Activated naive CD4-positive, alpha-beta T cell treated with anti-CD3 and anti-CD28 coated beads for 36 hours (primary cell): ENCODE measurements at regions of chr19 and their contacts with region 1.

Region 1: DNA sequence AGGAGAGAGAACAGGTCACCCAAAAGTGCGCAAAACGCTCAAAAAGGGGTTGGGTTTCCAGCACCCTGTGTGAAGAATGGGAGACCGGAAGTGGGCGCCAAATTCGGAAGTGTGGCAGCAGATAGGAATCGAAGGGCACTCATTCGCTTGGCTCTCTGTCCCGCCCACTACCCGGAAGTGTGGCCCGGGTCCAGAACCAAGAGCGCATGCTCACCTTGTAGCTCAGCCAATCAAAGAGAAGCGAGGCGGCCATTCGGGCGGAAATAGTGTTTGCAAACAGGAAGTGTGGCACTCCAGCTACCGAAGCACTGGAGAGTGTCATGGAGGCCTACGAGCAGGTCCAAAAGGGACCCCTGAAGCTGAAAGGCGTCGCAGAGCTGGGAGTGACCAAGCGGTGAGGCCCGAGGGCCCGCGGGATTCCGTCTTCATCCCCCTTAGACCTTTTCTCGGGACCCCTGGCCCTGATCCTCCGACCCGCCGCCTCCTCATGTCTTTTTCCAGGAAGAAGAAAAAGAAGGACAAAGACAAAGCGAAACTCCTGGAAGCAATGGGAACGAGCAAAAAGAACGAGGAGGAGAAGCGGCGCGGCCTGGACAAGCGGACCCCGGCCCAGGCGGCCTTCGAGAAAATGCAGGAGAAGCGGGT is at the start of gene FAM32A:
- DNase-seq: peak; percentile 100
- H3K4me3 Mint-ChIP-seq: peak within 1 kb of the TSS; percentile 98
- H3K27ac Mint-ChIP-seq: peak within 1 kb of the TSS; percentile 95
- H3K4me1 Mint-ChIP-seq: peaks cover 32% of the 10 kb centered on the region
- H3K27me3 Mint-ChIP-seq: no peaks in the 10 kb centered on the region
- total RNA-seq, gene FAM32A: 38.2 to 41.9 TPM

Region 2: GRCh38 chr19:16041299-16041990 is 143.8 kb before region 1 on chr19:
- CTCF ChIA-PET with region 1: interaction called, 33 read pairs
- intact Hi-C with region 1: loop called (anchors 1 kb)
- DNase-seq: peak; percentile 83
- H3K4me3 Mint-ChIP-seq: peak overlapping the region; percentile 21
- H3K27ac Mint-ChIP-seq: no peak overlapping the region
- H3K4me1 Mint-ChIP-seq: peaks cover 11% of the 10 kb centered on the region
- H3K27me3 Mint-ChIP-seq: no peaks in the 10 kb centered on the region

Region 3: DNA sequence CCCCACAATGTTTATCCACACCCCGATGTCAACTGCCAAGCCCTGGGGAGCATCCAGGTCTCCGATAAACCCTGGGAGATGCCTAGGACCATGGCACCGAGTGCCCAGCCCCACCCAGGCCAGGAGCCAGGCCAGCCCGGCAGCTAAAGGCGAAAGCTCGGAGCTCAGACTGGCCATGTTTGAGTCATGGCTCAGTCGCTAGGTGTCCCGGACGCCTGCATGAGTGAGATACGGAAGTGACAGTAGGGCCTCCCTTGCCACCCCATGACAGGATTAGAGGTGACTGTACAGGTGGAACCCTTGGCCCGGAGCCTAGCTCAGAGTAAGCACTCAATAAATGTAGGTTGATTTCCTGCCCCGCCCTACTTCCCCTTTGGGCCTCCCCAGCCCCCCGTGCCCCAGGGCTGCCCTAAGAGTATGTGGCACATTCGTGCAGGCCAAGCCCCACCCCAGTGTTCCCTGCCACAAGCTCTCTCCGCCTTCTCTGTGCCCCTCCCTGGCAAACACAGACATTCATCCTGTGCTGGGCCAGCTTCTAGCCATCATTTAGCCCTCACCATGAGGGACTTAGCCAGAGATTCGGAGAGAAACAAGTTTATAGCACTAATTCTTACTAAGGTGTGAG is 114.8 kb before region 1 on chr19:
- CTCF ChIA-PET with region 1: interaction called, 6 read pairs
- intact Hi-C with region 1: loop called (anchors 1 kb)
- DNase-seq: peak; percentile 96
- H3K4me3 Mint-ChIP-seq: no peak overlapping the region
- H3K27ac Mint-ChIP-seq: no peak overlapping the region
- H3K4me1 Mint-ChIP-seq: peaks cover 38% of the 10 kb centered on the region
- H3K27me3 Mint-ChIP-seq: no peaks in the 10 kb centered on the region

Region 4: GRCh38 chr19:16168465-16169081 is 16.7 kb before region 1 on chr19:
- CTCF ChIA-PET with region 1: interaction called, 10 read pairs
- intact Hi-C with region 1: no loop called
- DNase-seq: no peak
- H3K4me3 Mint-ChIP-seq: no peak overlapping the region
- H3K27ac Mint-ChIP-seq: no peak overlapping the region
- H3K4me1 Mint-ChIP-seq: peaks cover 4% of the 10 kb centered on the region
- H3K27me3 Mint-ChIP-seq: no peaks in the 10 kb centered on the region

Region 5: DNA sequence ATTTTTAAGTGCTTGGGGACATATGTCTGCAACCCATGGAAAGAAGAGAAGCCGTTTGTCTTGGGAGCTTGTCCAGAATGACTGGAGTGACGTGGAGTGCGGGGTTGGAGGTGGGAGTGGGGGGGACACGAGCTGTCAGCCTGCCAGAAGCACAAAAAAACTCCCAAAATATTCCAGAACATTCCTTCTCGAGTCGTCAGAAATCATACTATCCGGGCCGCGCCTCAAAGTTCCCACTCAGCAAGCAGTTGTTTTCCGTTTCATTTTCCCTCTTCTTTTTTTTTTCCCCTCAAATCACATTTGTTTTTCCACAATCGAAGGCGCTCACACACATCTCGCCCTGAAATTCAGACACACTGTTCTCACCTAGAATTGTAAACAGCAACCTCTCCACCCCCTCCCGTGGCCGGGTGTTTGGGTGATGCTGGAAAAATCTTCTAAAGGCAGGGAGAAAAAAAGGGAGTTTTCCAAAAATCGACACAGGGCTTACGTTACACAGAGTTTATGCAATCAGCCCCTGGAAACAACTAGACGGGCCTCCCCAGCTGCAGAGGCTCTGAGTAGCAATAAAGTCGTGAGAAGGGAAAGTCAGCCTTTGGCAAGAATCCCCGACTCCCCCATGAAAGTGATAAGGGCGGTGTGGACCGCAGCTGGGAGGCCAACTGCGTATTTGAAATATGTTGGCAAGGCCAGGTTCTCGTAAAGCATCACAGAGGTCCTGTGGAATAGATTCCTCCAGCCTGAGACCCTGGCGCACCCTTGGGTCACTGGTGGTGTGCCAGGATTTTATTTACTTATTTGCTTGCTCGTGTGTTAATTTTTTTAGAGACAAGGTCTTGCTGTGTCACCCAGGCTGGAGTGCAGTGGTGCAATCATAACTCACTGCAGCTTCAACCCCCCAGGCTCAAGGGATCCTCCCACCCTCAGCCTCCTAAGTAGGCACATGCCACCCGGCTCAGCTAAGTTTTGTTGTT is 108.2 kb after region 1 on chr19:
- CTCF ChIA-PET with region 1: no interaction called
- intact Hi-C with region 1: no loop called
- DNase-seq: no peak
- H3K4me3 Mint-ChIP-seq: no peak overlapping the region
- H3K27ac Mint-ChIP-seq: no peak overlapping the region
- H3K4me1 Mint-ChIP-seq: peaks cover 3% of the 10 kb centered on the region
- H3K27me3 Mint-ChIP-seq: no peaks in the 10 kb centered on the region